ENCODE measurements at regions of chr20 and their contacts with region 1.

Region 1: GRCh38 chr20:23116311-23117089 is 30.4 kb upstream of the CD93 start:
- DNase-seq: no peak
- ATAC-seq: peak; percentile 53
- H3K4me3 ChIP-seq: no peak overlapping the region
- H3K27ac ChIP-seq: no peak overlapping the region
- H3K4me1 ChIP-seq: peaks cover 27% of the 10 kb centered on the region
- H3K27me3 ChIP-seq: no peaks in the 10 kb centered on the region; a peak in 2 of 4 replicates
- CTCF ChIP-seq: no peak
- EP300 ChIP-seq: no peak
- POLR2A ChIP-seq: no peak
- RAD21 ChIP-seq: no peak

Region 2: DNA sequence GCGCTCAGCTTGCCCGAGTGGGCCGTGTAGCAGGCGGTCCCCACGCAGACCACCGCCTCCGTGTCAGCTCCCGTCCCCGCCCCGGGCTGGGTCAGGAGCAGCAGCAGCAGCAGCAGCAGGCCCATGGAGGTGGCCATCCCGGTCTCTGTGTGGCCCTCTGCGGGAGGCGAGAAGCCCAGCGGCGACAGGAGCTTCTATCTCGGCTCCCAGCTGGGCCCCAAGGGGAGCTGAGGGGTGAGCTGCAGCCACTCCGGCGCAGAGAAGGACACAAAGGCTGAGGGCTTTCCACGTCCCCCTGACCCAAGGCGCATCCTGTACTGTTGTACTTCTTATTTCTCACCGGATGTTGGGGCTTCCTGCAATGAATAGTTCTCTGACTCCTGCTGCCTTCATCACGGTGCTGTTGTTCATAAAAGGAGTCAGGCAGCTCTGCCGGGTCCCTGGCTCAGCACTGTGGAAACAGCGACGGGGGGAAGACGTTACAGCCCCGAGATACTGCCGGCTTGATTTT is 30.4 kb before region 1 on chr20 and contains the start of gene CD93:
- CTCF ChIA-PET with region 1: interaction called, 3 read pairs
- POLR2A ChIA-PET with region 1: interaction called, 3 read pairs
- RAD21 ChIA-PET with region 1: interaction called, 5 read pairs
- SMC1A ChIA-PET with region 1: interaction called, 10 read pairs
- in situ Hi-C with region 1: no loop called
- intact Hi-C with region 1: no loop called
- DNase-seq: no peak
- ATAC-seq: peak; percentile 70
- H3K4me3 ChIP-seq: no peak within 1 kb of the TSS
- H3K27ac ChIP-seq: peak within 1 kb of the TSS; percentile 13; the same call in 1 of the 2 replicates
- H3K4me1 ChIP-seq: peaks cover 14% of the 10 kb centered on the region
- H3K27me3 ChIP-seq: peaks cover 0 to 2% of the 10 kb centered on the region in 2 experiments; a peak in 1 of 4 replicates
- CTCF ChIP-seq: no peak
- EP300 ChIP-seq: no peak
- POLR2A ChIP-seq: no peak
- RAD21 ChIP-seq: no peak
- polyA plus RNA-seq, gene CD93: 0.35 to 0.55 TPM

Region 3: DNA sequence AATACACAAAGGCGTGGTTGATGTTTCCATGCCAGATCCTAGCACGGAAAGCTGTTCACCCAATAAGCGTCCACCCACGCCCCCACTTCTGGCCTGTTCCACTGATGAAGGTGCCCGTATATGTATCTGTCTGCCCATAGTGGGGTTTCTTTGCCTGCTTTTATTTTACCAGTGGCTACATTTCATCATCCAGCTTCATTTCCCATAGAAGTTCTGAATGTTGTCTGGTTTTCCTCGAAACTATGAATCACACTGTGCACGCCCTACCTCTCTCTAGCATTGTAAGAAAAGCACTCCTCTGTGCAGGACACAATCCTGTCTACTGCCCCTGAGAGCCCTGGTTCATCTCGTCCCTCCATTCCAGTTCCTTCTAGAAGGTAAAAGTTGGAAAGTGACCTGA is 21.6 kb before region 1 on chr20:
- CTCF ChIA-PET with region 1: interaction called, 5 read pairs
- POLR2A ChIA-PET with region 1: interaction called, 4 read pairs
- RAD21 ChIA-PET with region 1: interaction called, 20 read pairs
- SMC1A ChIA-PET with region 1: interaction called, 52 read pairs
- in situ Hi-C with region 1: no loop called
- intact Hi-C with region 1: no loop called
- DNase-seq: no peak
- ATAC-seq: no peak
- H3K4me3 ChIP-seq: no peak overlapping the region
- H3K27ac ChIP-seq: no peak overlapping the region
- H3K4me1 ChIP-seq: no peaks in the 10 kb centered on the region
- H3K27me3 ChIP-seq: peaks cover 0 to 6% of the 10 kb centered on the region in 2 experiments; a peak in 1 of 4 replicates
- CTCF ChIP-seq: no peak
- EP300 ChIP-seq: no peak
- POLR2A ChIP-seq: no peak
- RAD21 ChIP-seq: no peak

Region 4: GRCh38 chr20:23147964-23148730 is 31.6 kb after region 1 on chr20:
- CTCF ChIA-PET with region 1: interaction called, 5 read pairs
- POLR2A ChIA-PET with region 1: interaction called, 5 read pairs
- RAD21 ChIA-PET with region 1: interaction called, 16 read pairs
- SMC1A ChIA-PET with region 1: interaction called, 20 read pairs
- in situ Hi-C with region 1: loop called (anchors 5 kb)
- intact Hi-C with region 1: no loop called
- DNase-seq: peak; percentile 74
- ATAC-seq: peak; percentile 84
- H3K4me3 ChIP-seq: no peak overlapping the region
- H3K27ac ChIP-seq: peak overlapping the region; percentile 68
- H3K4me1 ChIP-seq: peaks cover 30% of the 10 kb centered on the region
- H3K27me3 ChIP-seq: no peaks in the 10 kb centered on the region
- CTCF ChIP-seq: no peak
- EP300 ChIP-seq: no peak
- POLR2A ChIP-seq: peak; percentile 66
- RAD21 ChIP-seq: no peak

Measured in GM12878 (cell line).